ENCODE measurements at regions of chr11 and their contacts with region 1.

Region 1: DNA sequence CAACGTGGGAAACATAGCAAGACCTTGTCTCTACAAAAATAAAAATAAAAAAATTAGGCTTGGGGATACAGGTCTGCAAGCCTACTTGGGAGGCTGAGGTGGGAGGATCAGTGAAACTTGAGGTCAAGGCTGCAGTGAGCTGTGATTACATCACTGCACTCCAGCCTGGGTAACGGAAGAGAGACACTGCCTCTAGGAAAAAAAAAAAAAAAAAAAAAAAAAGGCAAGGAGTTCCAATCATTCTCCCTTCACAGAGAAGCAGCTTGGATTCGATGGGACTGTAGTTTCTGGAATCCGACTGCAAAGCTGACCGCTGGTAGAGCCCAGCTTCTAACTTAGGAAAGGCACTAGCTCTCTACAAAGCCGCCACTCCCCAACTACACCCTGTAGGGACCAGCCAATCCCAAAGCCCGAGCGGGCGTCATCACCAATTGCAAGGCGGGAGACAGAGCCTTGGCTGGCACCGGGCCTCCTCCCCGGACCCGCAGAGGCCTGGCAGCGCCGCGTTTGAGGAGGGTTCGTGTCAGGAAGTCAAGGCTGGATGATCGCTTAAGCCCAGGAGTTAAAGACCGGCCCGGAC is 699 bp upstream of the DDB2 start:
- H3K4me3 ChIP-seq: peak overlapping the region; percentile 46
- H3K27ac ChIP-seq: peak overlapping the region; percentile 74
- H3K4me1 ChIP-seq: peaks cover 3% of the 10 kb centered on the region; the same call in 1 of the 2 replicates
- CTCF ChIP-seq: no peak

Region 2: DNA sequence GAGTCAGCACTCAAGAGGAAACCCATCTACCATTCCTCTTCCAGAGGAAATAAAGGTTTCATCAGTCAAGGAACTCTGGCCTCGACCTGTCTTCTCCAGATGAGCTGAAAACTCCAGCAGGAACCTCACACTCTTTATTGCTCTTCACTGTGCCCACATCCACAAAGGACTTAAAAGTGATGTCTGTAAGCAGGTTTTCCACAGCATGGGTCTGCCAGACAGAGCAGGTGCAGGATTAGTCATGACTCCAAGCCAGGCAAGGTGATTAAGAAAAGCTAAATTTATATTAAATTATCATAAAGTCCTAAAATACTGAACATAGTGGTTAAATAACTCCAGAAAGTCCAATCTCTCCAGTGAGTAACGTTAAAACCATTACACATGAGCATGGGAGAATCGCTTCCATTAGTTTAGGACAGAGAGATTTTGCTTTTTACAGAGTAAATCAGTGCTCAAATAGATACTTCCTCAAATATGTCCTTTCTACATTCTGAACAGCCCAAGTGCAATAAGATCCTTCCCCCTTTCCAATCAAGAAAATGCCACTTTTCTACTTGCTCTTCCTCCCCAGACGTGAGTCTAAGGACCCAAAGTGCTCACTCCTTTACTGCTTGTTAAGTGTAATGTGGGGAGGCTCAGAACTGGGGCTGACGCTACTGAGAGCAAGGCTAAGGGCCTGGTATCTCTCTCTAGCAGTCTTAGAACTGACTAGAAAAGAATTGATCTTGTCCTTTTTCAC is 357.3 kb before region 1 on chr11:
- CTCF ChIA-PET with region 1: no interaction called
- POLR2A ChIA-PET with region 1: no interaction called
- H3K4me3 ChIP-seq: no peak overlapping the region
- H3K27ac ChIP-seq: no peak overlapping the region
- H3K4me1 ChIP-seq: no peaks in the 10 kb centered on the region
- CTCF ChIP-seq: no peak

Region 3: DNA sequence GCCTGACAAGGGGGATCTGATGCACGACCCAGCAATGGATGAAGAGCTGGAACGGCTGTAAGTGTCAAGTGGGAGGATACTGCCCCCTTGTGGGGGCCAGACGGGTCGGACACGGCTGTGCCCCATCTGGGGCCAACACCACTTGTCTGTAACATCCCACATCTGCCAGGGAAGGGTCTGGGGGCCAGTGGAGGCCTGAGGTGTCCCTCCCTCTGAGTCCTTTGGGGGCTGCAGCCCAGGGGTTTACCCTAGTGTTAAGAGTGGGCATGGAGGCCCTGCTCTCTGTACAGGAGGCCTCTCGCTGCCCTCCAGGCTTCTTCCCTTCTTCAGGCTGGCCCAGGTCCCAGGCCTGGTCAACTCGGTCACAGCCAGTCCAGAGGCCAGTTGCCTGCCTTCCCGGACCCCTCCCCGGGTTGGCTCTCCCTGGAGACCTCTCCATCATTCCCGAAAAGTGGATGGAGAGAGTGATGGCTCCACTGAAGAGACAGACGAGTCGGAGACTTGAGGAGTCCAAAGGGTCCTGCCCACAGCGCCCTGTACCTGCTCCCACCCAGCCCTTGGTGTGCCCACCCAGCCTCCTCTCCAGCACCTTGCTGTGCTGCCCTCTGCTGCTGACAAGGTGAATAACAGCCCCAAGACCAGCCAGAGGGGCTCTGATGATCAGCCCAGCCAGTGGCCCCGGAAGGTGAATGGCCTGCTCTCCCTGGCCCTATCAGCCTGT is 52.8 kb before region 1 on chr11:
- CTCF ChIA-PET with region 1: no interaction called
- POLR2A ChIA-PET with region 1: interaction called, 10 read pairs
- H3K4me3 ChIP-seq: no peak overlapping the region
- H3K27ac ChIP-seq: no peak overlapping the region
- H3K4me1 ChIP-seq: no peaks in the 10 kb centered on the region
- CTCF ChIP-seq: peak; percentile 42

Region 4: GRCh38 chr11:47186076-47186936 is 27.8 kb before region 1 on chr11 and contains the start of gene PACSIN3:
- CTCF ChIA-PET with region 1: interaction called, 6 read pairs
- POLR2A ChIA-PET with region 1: interaction called, 46 read pairs
- H3K4me3 ChIP-seq: peak within 1 kb of the TSS; percentile 73
- H3K27ac ChIP-seq: peak within 1 kb of the TSS; percentile 72; the same call in 1 of the 2 replicates
- H3K4me1 ChIP-seq: peaks cover 9% of the 10 kb centered on the region
- CTCF ChIP-seq: no peak

Region 5: GRCh38 chr11:47233989-47234668 is 20.1 kb after region 1 on chr11:
- CTCF ChIA-PET with region 1: interaction called, 3 read pairs
- POLR2A ChIA-PET with region 1: interaction called, 15 read pairs
- H3K4me3 ChIP-seq: no peak overlapping the region
- H3K27ac ChIP-seq: no peak overlapping the region
- H3K4me1 ChIP-seq: no peaks in the 10 kb centered on the region
- CTCF ChIP-seq: no peak

Region 6: GRCh38 chr11:47248664-47249377 is 34.7 kb after region 1 on chr11 and contains the start of gene ACP2:
- CTCF ChIA-PET with region 1: interaction called, 4 read pairs
- POLR2A ChIA-PET with region 1: interaction called, 58 read pairs
- H3K4me3 ChIP-seq: peak within 1 kb of the TSS; percentile 72
- H3K27ac ChIP-seq: peak within 1 kb of the TSS; percentile 50
- H3K4me1 ChIP-seq: no peaks in the 10 kb centered on the region
- CTCF ChIP-seq: peak; percentile 65

Measured in HEK293 (cell line).